Activated CD4-positive, alpha-beta T cell treated with anti-CD3 and anti-CD28 coated beads, Interleukin-2, amount 10 ng/mL, durations not matched to agents 24 days and 14 days (primary cell): ENCODE measurements at regions of chr2 and their contacts with region 1.

Region 1: DNA sequence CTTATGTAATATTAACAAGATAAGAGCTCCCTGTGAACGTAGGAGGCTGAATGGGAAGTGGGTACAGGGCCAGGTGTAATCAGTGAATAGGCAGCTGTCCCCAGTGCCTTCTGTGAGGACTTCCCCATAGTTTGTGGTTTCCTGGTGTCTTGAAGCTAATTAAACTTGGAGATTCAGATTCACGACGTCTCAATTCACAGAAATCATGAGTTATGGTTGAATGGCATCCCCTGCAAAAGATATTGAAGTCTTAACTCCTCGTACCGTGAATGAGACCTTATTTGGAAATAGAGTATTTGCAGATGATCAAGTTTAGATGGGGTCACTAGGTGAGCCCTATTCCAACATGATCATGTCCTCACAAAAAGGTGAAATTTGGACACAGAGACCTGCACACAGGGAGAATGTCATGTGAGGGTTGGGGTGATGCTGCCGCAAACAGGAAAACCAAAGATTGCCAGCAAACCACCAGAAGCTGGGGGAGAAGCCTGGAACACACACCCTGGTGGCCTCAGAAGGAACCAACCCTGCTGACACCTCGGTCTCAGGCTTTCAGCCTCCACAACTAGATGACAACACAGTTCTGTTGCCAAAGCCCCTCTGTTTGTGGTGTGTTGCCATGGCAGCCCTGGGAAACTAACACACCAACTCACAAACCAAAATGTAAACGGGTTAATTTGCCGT is 13.2 kb downstream of the ARL4C start:
- DNase-seq: peak; percentile 95
- H3K4me3 Mint-ChIP-seq: peak overlapping the region; percentile 76
- H3K27ac Mint-ChIP-seq: peak overlapping the region; percentile 87
- H3K4me1 Mint-ChIP-seq: peaks cover 76% of the 10 kb centered on the region
- H3K27me3 Mint-ChIP-seq: no peaks in the 10 kb centered on the region

Region 2: DNA sequence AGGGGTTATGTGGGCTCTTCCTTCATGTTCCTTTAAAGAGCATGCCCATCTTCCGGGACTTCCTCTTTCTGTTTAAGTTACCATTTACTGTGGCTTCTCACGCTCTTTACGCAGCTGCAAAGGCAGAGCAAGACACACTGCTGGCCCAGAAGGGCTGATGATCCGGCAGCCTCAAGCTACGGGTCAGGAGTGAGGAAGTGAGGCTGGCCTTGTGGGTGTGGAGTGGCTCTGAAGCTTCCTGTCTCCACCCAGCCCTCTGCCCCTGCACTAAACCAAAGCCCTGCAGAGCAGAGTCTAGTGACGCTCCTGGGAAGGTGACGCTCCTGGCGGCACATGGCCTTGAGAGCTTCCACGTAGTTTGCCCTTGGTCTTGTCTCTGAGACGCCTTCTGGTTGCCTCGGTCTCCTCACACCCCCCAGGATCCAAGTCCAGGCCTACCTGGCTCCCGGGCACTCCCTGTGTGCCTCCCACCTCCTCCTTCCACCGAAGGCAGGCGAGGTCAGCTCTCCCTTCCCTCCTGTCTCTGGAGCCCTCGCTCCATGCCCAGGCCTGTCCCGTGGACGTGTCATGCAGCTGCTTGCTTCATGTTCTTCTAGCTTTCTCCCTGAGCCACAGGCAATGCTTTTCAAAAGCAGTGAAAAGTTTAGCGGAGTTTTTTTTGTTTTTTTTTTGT is 37.2 kb before region 1 on chr2:
- intact Hi-C with region 1: loop called (anchors 1 kb)
- DNase-seq: peak; percentile 96
- H3K4me3 Mint-ChIP-seq: peak overlapping the region; percentile 85
- H3K27ac Mint-ChIP-seq: peak overlapping the region; percentile 100
- H3K4me1 Mint-ChIP-seq: peaks cover 80% of the 10 kb centered on the region
- H3K27me3 Mint-ChIP-seq: no peaks in the 10 kb centered on the region

Region 3: GRCh38 chr2:234496835-234497591 is 13.3 kb after region 1 on chr2 and contains the start of gene ARL4C:
- intact Hi-C with region 1: no loop called
- DNase-seq: peak; percentile 90
- H3K4me3 Mint-ChIP-seq: peak within 1 kb of the TSS; percentile 90
- H3K27ac Mint-ChIP-seq: peak within 1 kb of the TSS; percentile 94
- H3K4me1 Mint-ChIP-seq: peaks cover 46% of the 10 kb centered on the region
- H3K27me3 Mint-ChIP-seq: peaks cover 1% of the 10 kb centered on the region
- total RNA-seq, gene ARL4C: 43.2 and 45.0 TPM in 2 replicates

Region 4: GRCh38 chr2:234521536-234521935 is 37.8 kb after region 1 on chr2:
- intact Hi-C with region 1: no loop called
- DNase-seq: no peak
- H3K4me3 Mint-ChIP-seq: no peak overlapping the region
- H3K27ac Mint-ChIP-seq: no peak overlapping the region
- H3K4me1 Mint-ChIP-seq: no peaks in the 10 kb centered on the region
- H3K27me3 Mint-ChIP-seq: peaks cover 2% of the 10 kb centered on the region